ENCODE measurements at regions of chr17 and their contacts with region 1.

Region 1: GRCh38 chr17:47970704-47971463 is at the start of gene CDK5RAP3:
- DNase-seq: peak; percentile 97
- H3K4me3 ChIP-seq: peak within 1 kb of the TSS; percentile 95
- H3K27ac ChIP-seq: peak within 1 kb of the TSS; percentile 78
- H3K27me3 ChIP-seq: no peaks in the 10 kb centered on the region
- CTCF ChIP-seq: peak; percentile 94
- polyA plus RNA-seq, gene CDK5RAP3: 71.2 and 79.7 TPM in 2 replicates

Region 2: DNA sequence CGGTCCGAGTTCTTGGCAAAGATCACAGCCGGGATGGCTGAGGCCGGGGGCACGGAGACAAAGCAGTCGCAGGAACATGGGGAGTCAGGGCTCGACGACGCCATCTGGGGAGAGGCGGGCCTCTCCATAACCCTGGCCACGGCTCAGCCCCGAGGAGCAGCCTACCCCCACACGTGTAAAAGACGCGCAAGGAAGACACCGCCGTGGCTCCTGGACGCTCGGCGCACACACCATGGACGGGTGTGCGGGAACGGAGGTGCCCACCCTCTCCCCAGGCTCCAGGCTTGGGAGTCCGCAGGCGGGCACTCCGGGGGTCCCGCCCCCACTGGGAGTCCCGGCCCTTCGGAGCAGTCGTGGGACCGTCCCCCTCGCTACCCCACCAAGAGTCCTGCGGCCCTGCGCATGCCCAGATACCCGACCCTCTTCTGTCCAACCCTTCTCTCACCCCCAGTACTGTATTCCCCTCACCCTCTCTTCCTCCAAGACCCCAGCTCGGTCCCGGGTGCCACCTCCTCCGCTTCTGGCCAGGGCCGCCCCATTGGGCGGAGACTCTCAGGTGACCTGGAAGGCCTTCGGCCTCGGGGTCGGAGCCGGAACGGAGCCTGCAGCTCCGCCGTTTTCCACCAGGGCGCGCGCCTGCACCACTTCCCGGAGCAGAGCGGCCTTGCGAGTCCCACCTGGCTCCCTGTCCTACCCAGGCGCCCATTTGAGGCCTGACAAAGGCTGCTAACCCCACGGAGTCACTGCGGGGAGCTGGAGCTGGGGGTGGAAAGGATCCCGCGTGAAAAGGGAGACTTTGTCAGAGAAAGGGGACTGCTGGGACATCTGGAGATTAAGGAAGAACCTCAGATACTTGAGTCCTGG is 129.9 kb before region 1 on chr17 and contains the start of gene SCRN2:
- CTCF ChIA-PET with region 1: interaction called, 14 read pairs
- POLR2A ChIA-PET with region 1: interaction called, 4 read pairs
- DNase-seq: peak; percentile 34
- H3K4me3 ChIP-seq: peak within 1 kb of the TSS; percentile 82
- H3K27ac ChIP-seq: no peak within 1 kb of the TSS
- H3K27me3 ChIP-seq: peaks cover 14% of the 10 kb centered on the region
- CTCF ChIP-seq: peak; percentile 98
- polyA plus RNA-seq, gene SCRN2: 13.3 and 17.2 TPM in 2 replicates

Region 3: DNA sequence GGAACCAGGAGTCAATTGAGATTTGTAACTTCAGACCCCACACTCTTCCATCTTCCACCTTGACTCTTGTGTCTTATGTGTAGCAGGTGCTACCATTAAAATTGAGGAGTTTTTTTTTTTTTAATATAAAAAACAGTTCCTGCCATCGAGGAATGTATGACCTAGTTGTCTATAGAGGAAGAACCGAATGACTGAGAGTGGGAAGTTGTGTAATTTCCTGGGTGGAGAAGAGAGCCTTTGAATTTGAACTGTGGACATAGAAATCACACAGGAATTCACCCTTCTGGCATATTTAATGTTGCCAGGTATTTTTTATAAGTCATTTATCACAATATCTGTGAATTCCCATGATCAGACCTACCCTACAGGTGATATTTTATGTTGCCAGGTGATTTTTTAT is 52.9 kb before region 1 on chr17:
- CTCF ChIA-PET with region 1: no interaction called
- POLR2A ChIA-PET with region 1: no interaction called
- DNase-seq: no peak
- H3K4me3 ChIP-seq: no peak overlapping the region
- H3K27ac ChIP-seq: no peak overlapping the region
- H3K27me3 ChIP-seq: no peaks in the 10 kb centered on the region
- CTCF ChIP-seq: no peak

Region 4: GRCh38 chr17:47949136-47949759 is 21.6 kb before region 1 on chr17:
- CTCF ChIA-PET with region 1: interaction called, 180 read pairs
- POLR2A ChIA-PET with region 1: interaction called, 6 read pairs
- DNase-seq: peak; percentile 63
- H3K4me3 ChIP-seq: peak overlapping the region; percentile 39
- H3K27ac ChIP-seq: peak overlapping the region; percentile 33
- H3K27me3 ChIP-seq: no peaks in the 10 kb centered on the region
- CTCF ChIP-seq: peak; percentile 95

Region 5: DNA sequence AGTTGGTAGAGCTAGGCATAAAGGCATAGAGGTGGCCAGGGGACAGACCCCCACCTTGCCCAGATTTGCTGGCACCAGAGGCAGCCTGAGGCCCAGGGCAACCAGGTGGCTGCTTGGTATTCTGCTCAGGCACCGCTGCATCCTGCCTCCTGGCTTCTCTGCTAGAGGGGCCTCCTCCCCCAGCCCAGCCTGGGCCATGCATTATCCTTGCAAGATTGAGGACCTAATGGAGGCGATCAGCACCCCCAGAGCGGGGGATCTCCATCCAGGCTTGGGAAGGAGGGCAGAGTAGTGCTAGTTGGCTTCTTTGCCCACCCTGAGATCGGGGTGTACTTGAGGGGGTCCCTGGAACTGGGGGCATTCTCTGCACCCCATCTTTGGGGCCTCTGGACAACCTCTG is 23.8 kb after region 1 on chr17:
- CTCF ChIA-PET with region 1: interaction called, 10 read pairs
- POLR2A ChIA-PET with region 1: no interaction called
- DNase-seq: no peak
- H3K4me3 ChIP-seq: no peak overlapping the region
- H3K27ac ChIP-seq: no peak overlapping the region
- H3K27me3 ChIP-seq: peaks cover 10% of the 10 kb centered on the region
- CTCF ChIP-seq: no peak

Region 6: GRCh38 chr17:48011405-48012150 is 40.7 kb after region 1 on chr17:
- CTCF ChIA-PET with region 1: interaction called, 21 read pairs
- POLR2A ChIA-PET with region 1: interaction called, 3 read pairs
- DNase-seq: no peak
- H3K4me3 ChIP-seq: peak overlapping the region; percentile 54
- H3K27ac ChIP-seq: no peak overlapping the region
- H3K27me3 ChIP-seq: peaks cover 9% of the 10 kb centered on the region
- CTCF ChIP-seq: peak; percentile 59

Region 7: GRCh38 chr17:48228721-48229120 is 257.8 kb after region 1 on chr17:
- CTCF ChIA-PET with region 1: no interaction called
- POLR2A ChIA-PET with region 1: no interaction called
- DNase-seq: no peak
- H3K4me3 ChIP-seq: no peak overlapping the region
- H3K27ac ChIP-seq: no peak overlapping the region
- H3K27me3 ChIP-seq: peaks cover 58% of the 10 kb centered on the region
- CTCF ChIP-seq: no peak

Measured in AG04450 (cell line).